Heart right ventricle (tissue), 16 donors: ENCODE measurements at regions of chr12 and their contacts with region 1.

Region 1: DNA sequence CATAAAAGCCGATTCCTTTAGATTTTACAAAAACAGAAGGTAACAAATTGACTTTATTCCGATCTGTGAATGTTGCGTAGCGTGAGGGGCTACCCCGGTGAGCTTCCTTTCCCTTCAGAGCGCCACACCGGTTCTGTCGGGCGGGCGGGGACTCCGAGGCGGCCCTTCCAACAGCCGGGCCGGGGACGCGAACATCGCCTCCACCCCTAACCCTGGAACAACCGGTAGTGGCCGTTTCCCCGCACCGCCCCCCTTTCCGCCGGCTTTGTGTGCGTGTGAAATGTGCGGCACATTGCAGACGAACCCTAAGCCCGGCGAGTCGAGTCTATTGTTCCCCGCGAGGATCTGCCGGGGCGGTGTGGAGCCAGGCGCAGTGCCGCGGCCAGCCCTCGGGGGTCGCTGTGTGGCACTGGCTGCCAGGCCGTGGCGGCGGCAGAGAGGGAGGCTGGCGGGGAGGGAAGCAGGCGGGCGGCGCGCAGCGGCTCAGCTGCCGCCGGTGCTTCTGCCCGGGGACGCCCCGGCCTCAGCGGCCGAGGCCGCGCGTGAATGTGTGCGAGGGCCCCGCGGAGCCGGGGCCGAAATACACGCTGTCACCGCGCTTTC is 775 bp upstream of the ARID2 start:
- DNase-seq: peak; percentile 97 to 98
- ATAC-seq: peak; percentile 79 to 92 (median 84)
- H3K4me3 ChIP-seq: peak overlapping the region; percentile 60 to 95 (median 86)
- H3K27ac ChIP-seq: peak overlapping the region; percentile 94 to 99 (median 98)
- H3K4me1 ChIP-seq: peaks cover 7 to 51% (median 45%) of the 10 kb centered on the region in 9 donors
- H3K27me3 ChIP-seq: no peaks in the 10 kb centered on the region
- CTCF ChIP-seq: peak; percentile 89 to 99 (median 98)

Region 2: GRCh38 chr12:45409966-45410365 is 318.8 kb before region 1 on chr12:
- intact Hi-C with region 1: loop called in 2 of 10 experiments (anchors 10 kb)
- DNase-seq: peak in 1 of 2 donors; percentile 50
- ATAC-seq: peak; percentile 34 to 88 (median 76)
- H3K4me3 ChIP-seq: no peak overlapping the region
- H3K27ac ChIP-seq: peak overlapping the region in 6 of 10 donors; percentile 27 to 73 (median 62)
- H3K4me1 ChIP-seq: peaks cover 0 to 44% (median 28%) of the 10 kb centered on the region in 9 donors
- H3K27me3 ChIP-seq: no peaks in the 10 kb centered on the region
- CTCF ChIP-seq: no peak

Region 3: DNA sequence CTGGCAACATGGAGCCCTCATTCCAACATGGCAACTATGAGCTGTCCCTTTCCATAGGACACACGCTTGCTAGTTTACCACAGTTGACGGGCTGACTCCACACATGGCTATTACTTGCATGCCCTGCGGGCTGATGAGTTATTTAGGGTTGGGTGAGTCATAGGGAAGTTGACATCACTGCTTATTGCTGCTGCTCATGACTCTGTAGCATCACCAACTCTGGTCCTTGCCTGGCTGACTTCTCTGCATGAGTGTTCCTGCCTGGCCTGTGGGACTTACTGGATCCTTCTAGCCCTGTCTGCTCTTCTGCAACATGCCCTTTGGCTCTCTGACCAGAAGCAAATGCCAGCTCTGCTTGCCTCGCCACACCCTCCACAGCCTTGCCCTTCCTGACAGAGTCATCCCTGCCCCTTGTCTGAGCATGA is 313.3 kb before region 1 on chr12:
- intact Hi-C with region 1: loop called in 1 of 10 experiments (anchors 10 kb)
- DNase-seq: peak; percentile 18 to 61
- ATAC-seq: peak; percentile 68 to 98 (median 95)
- H3K4me3 ChIP-seq: no peak overlapping the region
- H3K27ac ChIP-seq: peak overlapping the region in 6 of 10 donors; percentile 25 to 74 (median 58)
- H3K4me1 ChIP-seq: peaks cover 0 to 16% (median 4%) of the 10 kb centered on the region in 9 donors
- H3K27me3 ChIP-seq: no peaks in the 10 kb centered on the region
- CTCF ChIP-seq: no peak

Region 4: GRCh38 chr12:45990468-45991283 is 261.9 kb after region 1 on chr12 and contains the start of gene SCAF11:
- intact Hi-C with region 1: loop called in 5 of 10 experiments (anchors 1 to 10 kb)
- DNase-seq: peak; percentile 100
- ATAC-seq: peak; percentile 92 to 97 (median 95)
- H3K4me3 ChIP-seq: peak within 1 kb of the TSS; percentile 68 to 97 (median 86)
- H3K27ac ChIP-seq: peak within 1 kb of the TSS; percentile 96 to 100 (median 99)
- H3K4me1 ChIP-seq: peaks cover 7 to 49% (median 39%) of the 10 kb centered on the region in 9 donors
- H3K27me3 ChIP-seq: no peaks in the 10 kb centered on the region
- CTCF ChIP-seq: peak; percentile 90 to 98 (median 94)
- total RNA-seq, gene SCAF11: 71.9 to 112 (median 87.3) TPM

Region 5: DNA sequence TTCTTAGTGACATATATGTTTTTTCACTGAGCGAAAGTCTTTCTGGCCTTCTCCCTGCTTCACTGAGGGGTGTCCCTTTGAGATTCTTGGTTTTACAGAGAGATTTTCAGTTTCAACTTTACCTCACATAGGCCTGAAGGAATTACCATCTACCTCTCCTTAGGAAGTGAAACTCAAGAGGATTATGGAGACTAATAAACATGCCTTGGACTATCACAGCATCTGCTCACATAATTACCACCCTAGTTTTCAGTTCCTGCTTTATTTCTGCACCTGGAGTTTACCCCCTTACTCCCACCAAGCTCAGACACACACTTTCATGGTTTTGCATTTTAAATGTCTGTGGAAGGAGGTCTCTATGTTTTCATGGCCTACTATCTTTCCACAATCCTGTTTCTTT is 380.0 kb after region 1 on chr12:
- intact Hi-C with region 1: no loop called
- DNase-seq: no peak
- ATAC-seq: no peak
- H3K4me3 ChIP-seq: no peak overlapping the region
- H3K27ac ChIP-seq: no peak overlapping the region
- H3K4me1 ChIP-seq: peaks cover 0 to 8% (median 0%) of the 10 kb centered on the region in 9 donors
- H3K27me3 ChIP-seq: no peaks in the 10 kb centered on the region
- CTCF ChIP-seq: no peak